Activated CD8-positive, alpha-beta memory T cell treated with anti-CD3 and anti-CD28 coated beads, Interleukin-2, amount 10 ng/mL, durations not matched to agents 7 days and 5 days (primary cell): ENCODE measurements at regions of chr12 and their contacts with region 1.

Region 1: GRCh38 chr12:113174461-113175384 is 10.6 kb downstream of the DDX54 start:
- DNase-seq: peak; percentile 82
- ATAC-seq: peak; percentile 84
- H3K4me3 Mint-ChIP-seq: no peak overlapping the region
- H3K27ac Mint-ChIP-seq: no peak overlapping the region
- H3K4me1 Mint-ChIP-seq: peaks cover 2% of the 10 kb centered on the region
- H3K27me3 Mint-ChIP-seq: no peaks in the 10 kb centered on the region

Region 2: DNA sequence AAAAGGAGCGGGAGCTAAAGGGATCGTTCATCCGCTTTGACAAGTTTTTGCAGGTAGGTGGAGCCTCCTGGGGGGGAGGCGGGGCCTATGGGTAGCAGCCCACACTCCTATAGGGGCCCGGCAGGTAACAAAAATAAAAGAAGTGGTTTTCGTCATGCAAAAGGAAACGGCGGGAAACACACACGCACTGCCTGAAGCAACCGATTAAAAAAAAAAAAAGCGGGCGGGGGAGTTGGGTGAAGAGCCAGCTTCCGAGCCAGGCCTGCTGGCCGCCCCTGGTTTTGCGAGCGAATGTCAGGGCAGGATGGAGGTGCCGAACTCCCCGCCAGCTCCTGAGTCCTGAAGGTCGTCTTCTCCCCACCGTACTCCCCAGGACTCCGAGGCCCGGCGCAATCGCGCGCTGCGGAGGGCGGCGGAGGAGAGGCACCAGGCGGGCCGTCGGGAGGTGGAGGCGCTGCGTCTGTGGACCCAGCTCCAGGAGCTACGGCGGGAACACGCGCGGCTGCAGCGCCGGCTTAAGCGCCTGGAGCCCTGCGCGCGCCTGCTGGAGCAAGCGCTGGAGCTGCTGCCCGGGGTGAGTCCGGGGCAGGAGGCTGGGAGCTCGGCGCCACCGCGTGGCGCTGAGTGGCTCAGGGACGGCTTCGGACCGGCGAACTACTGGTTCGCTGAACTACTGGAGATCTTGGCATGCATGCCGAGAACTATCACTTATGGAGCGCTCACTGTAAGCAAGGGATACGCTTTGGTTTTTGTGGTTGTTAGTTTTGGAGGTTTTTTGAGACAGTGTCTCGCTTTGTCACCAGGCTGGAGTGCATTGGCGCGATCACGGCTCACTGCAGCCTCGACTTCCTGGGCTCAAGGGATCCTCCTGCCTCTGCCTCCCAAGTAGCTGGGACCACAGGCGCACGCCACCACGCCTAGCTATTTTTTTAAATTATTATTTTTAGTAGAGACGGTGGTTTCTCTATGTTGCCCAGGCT is 21.6 kb before region 1 on chr12:
- CTCF ChIA-PET with region 1: interaction called, 62 read pairs
- DNase-seq: peak; percentile 68
- ATAC-seq: peak; percentile 85
- H3K4me3 Mint-ChIP-seq: peak overlapping the region; percentile 44
- H3K27ac Mint-ChIP-seq: no peak overlapping the region
- H3K4me1 Mint-ChIP-seq: peaks cover 21% of the 10 kb centered on the region
- H3K27me3 Mint-ChIP-seq: peaks cover 41% of the 10 kb centered on the region

Region 3: GRCh38 chr12:113161414-113162016 is 13.2 kb before region 1 on chr12:
- CTCF ChIA-PET with region 1: interaction called, 62 read pairs
- DNase-seq: no peak
- ATAC-seq: peak; percentile 24
- H3K4me3 Mint-ChIP-seq: no peak overlapping the region
- H3K27ac Mint-ChIP-seq: no peak overlapping the region
- H3K4me1 Mint-ChIP-seq: peaks cover under 1% of the 10 kb centered on the region
- H3K27me3 Mint-ChIP-seq: no peaks in the 10 kb centered on the region

Region 4: DNA sequence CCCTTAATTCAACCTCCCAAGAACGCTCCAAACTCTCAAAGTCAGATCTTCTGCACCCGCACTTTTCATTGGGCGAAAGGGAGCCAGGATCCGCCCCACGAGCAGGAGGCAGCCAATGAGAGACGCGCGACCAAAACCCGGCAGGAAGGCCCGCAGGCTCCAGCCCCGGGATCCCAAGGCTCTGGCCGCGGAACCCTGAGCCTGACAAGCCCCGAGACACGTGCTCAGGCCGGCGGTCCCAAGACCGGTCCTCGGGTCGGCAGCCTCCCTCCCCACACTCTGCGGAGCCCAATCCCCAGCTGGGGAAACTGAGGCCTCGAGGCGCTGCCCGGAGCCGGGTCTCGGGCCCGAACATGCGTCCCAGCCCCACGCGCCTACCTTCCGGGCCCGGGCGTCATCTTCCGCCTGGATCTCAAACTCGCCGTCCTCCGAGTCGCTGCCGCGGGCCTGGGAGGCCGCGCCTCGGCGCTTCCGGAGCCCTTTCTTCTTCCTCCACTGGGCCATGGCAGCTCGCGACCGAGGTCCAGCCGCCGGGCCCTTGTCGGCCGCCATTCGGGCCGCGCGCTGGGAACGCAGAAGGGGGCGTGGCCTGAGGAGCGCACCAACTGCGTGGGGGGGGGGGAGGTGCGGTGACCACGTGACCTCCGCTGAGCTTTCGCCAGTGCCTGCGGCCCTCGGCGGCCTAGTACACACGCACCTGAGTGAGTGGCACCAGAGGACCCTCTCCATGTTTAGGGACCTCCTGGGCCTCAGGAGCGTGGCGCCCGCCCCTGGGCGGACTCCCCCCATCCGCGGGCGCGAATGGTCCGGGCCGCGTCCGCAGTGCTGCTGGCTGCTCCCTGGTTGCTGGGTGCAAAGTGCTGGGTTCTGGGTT is 10.4 kb after region 1 on chr12 and contains the starts of genes DDX54 and RITA1:
- CTCF ChIA-PET with region 1: interaction called, 24 read pairs
- DNase-seq: peak; percentile 93
- ATAC-seq: peak; percentile 91
- H3K4me3 Mint-ChIP-seq: peak within 1 kb of the TSS; percentile 98
- H3K27ac Mint-ChIP-seq: peak within 1 kb of the TSS; percentile 97
- H3K4me1 Mint-ChIP-seq: peaks cover 44% of the 10 kb centered on the region
- H3K27me3 Mint-ChIP-seq: no peaks in the 10 kb centered on the region
- total RNA-seq, gene DDX54: 71.5 to 99.0 TPM
- total RNA-seq, gene RITA1: 23.1 to 29.6 TPM

Region 5: DNA sequence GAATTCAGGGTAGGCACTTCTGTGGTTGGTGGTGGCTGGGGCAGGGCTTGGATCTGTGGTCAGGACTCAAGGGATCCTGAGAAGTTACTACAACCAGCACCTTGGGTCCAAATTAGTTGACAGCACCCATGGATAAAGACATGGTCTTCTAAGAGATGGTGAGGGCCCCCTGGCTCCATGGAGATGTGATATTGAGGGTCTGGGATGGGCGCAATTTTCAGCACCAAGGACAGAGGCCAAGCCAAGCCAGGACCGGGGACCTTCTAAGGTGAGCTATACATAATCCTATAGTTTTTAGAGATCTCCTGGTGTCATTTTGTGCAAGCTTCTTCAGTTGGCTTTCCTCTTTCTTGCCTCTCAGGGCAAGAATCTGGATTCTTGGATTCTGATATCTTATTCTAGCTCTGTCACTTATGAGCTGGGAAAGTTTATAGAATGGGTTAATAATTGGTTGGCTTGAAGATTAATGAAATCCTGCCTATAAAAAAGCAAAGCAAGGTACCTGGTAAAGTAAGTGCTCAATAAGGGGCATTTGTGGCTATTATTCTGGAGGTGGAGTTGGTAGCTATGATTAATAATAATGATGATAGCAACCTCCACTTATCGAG is 427.0 kb after region 1 on chr12:
- CTCF ChIA-PET with region 1: no interaction called
- DNase-seq: no peak
- ATAC-seq: no peak
- H3K4me3 Mint-ChIP-seq: no peak overlapping the region
- H3K27ac Mint-ChIP-seq: no peak overlapping the region
- H3K4me1 Mint-ChIP-seq: no peaks in the 10 kb centered on the region
- H3K27me3 Mint-ChIP-seq: no peaks in the 10 kb centered on the region